OCI-LY7 (cell line): ENCODE measurements at regions of chr10 and their contacts with region 1.

Region 1: GRCh38 chr10:61896854-61897661 is 4.4 kb upstream of the ARID5B start:
- DNase-seq: peak; percentile 95
- H3K4me3 ChIP-seq: peak overlapping the region; percentile 93
- H3K27ac ChIP-seq: peak overlapping the region; percentile 96
- H3K4me1 ChIP-seq: peaks cover 36% of the 10 kb centered on the region
- CTCF ChIP-seq: peak; percentile 83

Region 2: GRCh38 chr10:59906417-59907202 is 1990.4 kb before region 1 on chr10 and contains the start of gene CCDC6:
- CTCF ChIA-PET with region 1: interaction called, 10 read pairs
- POLR2A ChIA-PET with region 1: no interaction called
- intact Hi-C with region 1: no loop called
- DNase-seq: peak; percentile 92
- H3K4me3 ChIP-seq: peak within 1 kb of the TSS; percentile 100
- H3K27ac ChIP-seq: peak within 1 kb of the TSS; percentile 77
- H3K4me1 ChIP-seq: peaks cover 39% of the 10 kb centered on the region
- CTCF ChIP-seq: peak; percentile 69
- total RNA-seq, gene CCDC6: 9.5 and 10.9 TPM in 2 replicates

Region 3: GRCh38 chr10:61974601-61975390 is 77.7 kb after region 1 on chr10:
- CTCF ChIA-PET with region 1: no interaction called
- POLR2A ChIA-PET with region 1: interaction called, 18 read pairs
- intact Hi-C with region 1: no loop called
- DNase-seq: peak; percentile 77
- H3K4me3 ChIP-seq: peak overlapping the region; percentile 50
- H3K27ac ChIP-seq: peak overlapping the region; percentile 86
- H3K4me1 ChIP-seq: peaks cover 80% of the 10 kb centered on the region
- CTCF ChIP-seq: no peak

Region 4: DNA sequence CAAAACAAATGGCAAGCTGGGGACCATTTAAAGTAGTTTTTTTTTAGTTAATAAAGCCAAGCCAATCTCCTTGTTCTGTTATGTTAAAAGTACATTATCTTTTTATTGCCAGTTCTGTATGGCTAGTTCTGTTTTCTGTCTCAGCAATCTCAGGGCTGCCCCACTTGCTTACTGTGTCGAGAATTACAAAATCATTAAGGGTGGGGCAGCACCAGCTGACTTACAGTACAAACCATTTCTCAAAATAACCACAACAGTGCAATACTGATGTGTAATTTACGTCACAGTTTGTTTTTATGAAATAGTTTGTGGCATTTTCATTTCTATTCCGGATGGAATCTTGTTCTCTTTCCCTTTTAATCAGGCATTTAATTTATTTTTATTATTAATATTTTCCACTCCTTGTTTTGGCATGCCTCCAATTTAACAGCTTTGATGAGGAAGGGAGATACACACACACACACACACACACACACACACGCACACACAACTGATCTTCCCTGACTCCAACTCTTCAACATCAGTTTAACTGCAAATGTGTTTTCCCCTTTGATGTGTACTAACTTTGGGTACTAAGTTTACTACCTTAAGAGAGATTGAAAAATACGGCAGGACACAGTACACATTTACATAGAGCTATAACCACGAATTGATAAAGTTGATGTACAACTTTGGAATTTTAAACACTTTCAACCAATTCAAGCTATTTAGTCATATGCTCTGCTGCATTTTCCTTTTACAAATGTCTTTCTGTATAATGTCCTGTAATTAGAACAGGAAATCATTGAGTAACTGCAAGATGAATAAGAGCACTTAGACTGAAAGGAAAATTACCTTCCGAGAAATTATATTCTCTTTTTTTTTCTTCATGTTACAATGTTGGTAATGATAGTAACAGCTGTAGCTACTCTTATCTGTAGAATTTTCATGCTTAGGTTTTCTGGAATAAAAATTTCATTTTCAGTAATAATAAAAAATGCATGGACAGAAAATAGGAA is 95.9 kb after region 1 on chr10:
- CTCF ChIA-PET with region 1: interaction called, 3 read pairs
- POLR2A ChIA-PET with region 1: interaction called, 171 read pairs
- intact Hi-C with region 1: loop called (anchors 1 kb)
- DNase-seq: peak; percentile 67
- H3K4me3 ChIP-seq: peak overlapping the region; percentile 58
- H3K27ac ChIP-seq: peak overlapping the region; percentile 80
- H3K4me1 ChIP-seq: peaks cover 100% of the 10 kb centered on the region
- CTCF ChIP-seq: no peak

Region 5: GRCh38 chr10:62045765-62046521 is 148.9 kb after region 1 on chr10:
- CTCF ChIA-PET with region 1: interaction called, 4 read pairs
- POLR2A ChIA-PET with region 1: interaction called, 277 read pairs
- intact Hi-C with region 1: loop called (anchors 1 kb)
- DNase-seq: peak; percentile 22
- H3K4me3 ChIP-seq: peak overlapping the region; percentile 27
- H3K27ac ChIP-seq: peak overlapping the region; percentile 76
- H3K4me1 ChIP-seq: peaks cover 98% of the 10 kb centered on the region
- CTCF ChIP-seq: no peak

Region 6: GRCh38 chr10:62244780-62245467 is 347.9 kb after region 1 on chr10:
- CTCF ChIA-PET with region 1: interaction called, 3 read pairs
- POLR2A ChIA-PET with region 1: interaction called, 21 read pairs
- intact Hi-C with region 1: loop called (anchors 1 kb)
- DNase-seq: peak; percentile 86
- H3K4me3 ChIP-seq: no peak overlapping the region
- H3K27ac ChIP-seq: peak overlapping the region; percentile 67
- H3K4me1 ChIP-seq: peaks cover 26% of the 10 kb centered on the region
- CTCF ChIP-seq: peak; percentile 99

Region 7: DNA sequence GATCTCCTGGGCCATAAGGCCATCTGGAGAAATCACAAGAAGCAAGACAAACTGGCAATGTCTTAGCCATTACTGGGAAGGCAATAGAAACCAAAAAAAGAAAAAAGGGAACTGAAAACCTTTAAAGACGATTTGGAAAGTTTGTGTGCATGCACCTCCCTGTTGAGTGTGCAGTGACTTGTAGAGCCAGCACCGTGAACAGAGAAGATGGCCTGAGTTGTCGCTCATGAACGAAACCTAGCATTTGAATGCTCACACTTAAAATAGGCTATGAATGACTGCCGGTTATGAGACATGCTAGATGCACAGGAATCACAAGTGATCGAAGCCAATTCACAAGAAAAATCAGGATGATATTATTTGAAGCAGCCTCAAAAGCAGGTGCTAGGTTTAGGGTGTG is 756.2 kb after region 1 on chr10:
- CTCF ChIA-PET with region 1: no interaction called
- POLR2A ChIA-PET with region 1: no interaction called
- intact Hi-C with region 1: no loop called
- DNase-seq: peak; percentile 99
- H3K4me3 ChIP-seq: peak overlapping the region; percentile 42
- H3K27ac ChIP-seq: peak overlapping the region; percentile 96
- H3K4me1 ChIP-seq: peaks cover 74% of the 10 kb centered on the region
- CTCF ChIP-seq: no peak